ENCODE measurements at regions of chr2 and their contacts with region 1.

Region 1: GRCh38 chr2:27281855-27282559 is at the start of gene TRIM54:
- DNase-seq: no peak
- H3K4me3 ChIP-seq: no peak within 1 kb of the TSS
- H3K27ac ChIP-seq: no peak within 1 kb of the TSS
- H3K4me1 ChIP-seq: no peaks in the 10 kb centered on the region
- H3K27me3 ChIP-seq: peaks cover 0 to 5% (median 0%) of the 10 kb centered on the region in 5 experiments

Region 2: GRCh38 chr2:27249891-27250651 is 31.9 kb before region 1 on chr2:
- CTCF ChIA-PET with region 1: interaction called, 90 read pairs
- POLR2A ChIA-PET with region 1: no interaction called
- DNase-seq: peak; percentile 54 to 74 (median 70)
- H3K4me3 ChIP-seq: peak overlapping the region in 3 of 7 experiments; percentile 11 to 22 (median 13)
- H3K27ac ChIP-seq: no peak overlapping the region
- H3K4me1 ChIP-seq: peaks cover 0 to 7% (median 1%) of the 10 kb centered on the region in 4 experiments
- H3K27me3 ChIP-seq: peaks cover 0 to 8% (median 0%) of the 10 kb centered on the region in 5 experiments

Region 3: DNA sequence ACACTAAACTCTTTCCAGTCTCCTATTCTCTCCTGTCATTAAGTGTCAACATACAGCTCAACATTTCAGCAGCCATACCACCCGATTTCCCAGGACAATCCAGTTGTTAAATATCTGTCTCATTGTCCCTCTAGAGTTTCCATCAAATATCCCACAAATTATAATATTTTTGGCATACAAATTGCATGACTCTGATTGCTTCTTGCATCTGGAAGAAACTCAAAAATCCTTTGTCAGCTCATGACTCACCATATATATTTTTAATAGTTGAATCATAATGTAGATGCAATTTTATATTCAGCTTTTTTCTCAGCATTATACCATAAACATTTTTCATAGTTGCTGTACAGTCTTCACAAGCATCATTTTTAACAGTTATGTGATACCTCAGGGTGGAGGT is 26.3 kb before region 1 on chr2:
- CTCF ChIA-PET with region 1: interaction called, 119 read pairs
- POLR2A ChIA-PET with region 1: no interaction called
- DNase-seq: no peak
- H3K4me3 ChIP-seq: no peak overlapping the region
- H3K27ac ChIP-seq: no peak overlapping the region
- H3K4me1 ChIP-seq: no peaks in the 10 kb centered on the region
- H3K27me3 ChIP-seq: peaks cover 3 to 51% (median 13%) of the 10 kb centered on the region in 5 experiments

Region 4: DNA sequence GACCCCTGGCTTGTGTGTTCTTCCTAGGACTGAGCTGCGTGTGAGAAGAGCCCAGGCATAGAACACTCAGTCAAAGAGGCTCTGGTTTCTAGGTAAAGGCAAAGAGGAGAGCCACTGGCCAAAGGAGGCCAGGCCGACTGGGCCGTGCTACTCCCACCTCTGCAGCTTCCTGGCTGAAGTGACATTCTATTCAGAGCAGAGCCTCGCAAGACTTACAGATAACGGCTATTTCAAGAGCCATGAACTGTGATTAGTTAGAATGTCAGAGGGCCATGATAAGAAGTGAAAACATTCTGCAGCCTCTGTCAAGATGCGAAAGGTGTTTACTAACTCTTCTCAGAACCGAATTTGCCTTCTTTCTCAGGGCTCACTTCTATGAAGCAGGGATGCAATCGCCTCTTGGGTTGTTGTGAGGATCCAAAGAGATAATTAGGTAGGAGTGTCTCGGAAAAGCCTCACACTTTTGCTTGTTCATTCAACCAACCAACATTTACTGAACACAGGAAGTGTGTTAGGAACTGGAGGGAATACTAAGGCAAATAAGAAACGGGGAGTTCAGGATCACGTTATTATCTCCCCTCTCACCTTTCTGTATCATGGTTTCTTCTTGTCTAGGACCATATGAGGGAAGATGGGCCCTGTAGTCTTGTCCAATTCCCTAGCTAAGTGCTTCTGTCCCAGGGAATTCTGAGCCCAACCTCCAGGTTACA is 10.2 kb before region 1 on chr2:
- CTCF ChIA-PET with region 1: interaction called, 119 read pairs
- POLR2A ChIA-PET with region 1: no interaction called
- DNase-seq: no peak
- H3K4me3 ChIP-seq: no peak overlapping the region
- H3K27ac ChIP-seq: no peak overlapping the region
- H3K4me1 ChIP-seq: peaks cover 0 to 5% (median 2%) of the 10 kb centered on the region in 4 experiments
- H3K27me3 ChIP-seq: peaks cover 0 to 5% (median 2%) of the 10 kb centered on the region in 5 experiments